HepG2 (cell line): ENCODE measurements at regions of chr20 and their contacts with region 1.

Region 1: GRCh38 chr20:33992923-33993575 is 662 bp upstream of the RALY start:
- DNase-seq: peak; percentile 100
- ATAC-seq: peak; percentile 84
- H3K4me3 ChIP-seq: peak overlapping the region; percentile 95 to 98 (median 96)
- H3K27ac ChIP-seq: peak overlapping the region; percentile 92
- H3K4me1 ChIP-seq: peaks cover 53% of the 10 kb centered on the region
- H3K27me3 ChIP-seq: no peaks in the 10 kb centered on the region; a peak in 1 of 5 replicates
- CTCF ChIP-seq: no peak
- EP300 ChIP-seq: peak in 1 of 2 experiments; percentile 25; a peak in 1 of 4 replicates
- POLR2A ChIP-seq: peak; percentile 99
- RAD21 ChIP-seq: peak; percentile 42; the same call in 1 of the 2 replicates

Region 2: DNA sequence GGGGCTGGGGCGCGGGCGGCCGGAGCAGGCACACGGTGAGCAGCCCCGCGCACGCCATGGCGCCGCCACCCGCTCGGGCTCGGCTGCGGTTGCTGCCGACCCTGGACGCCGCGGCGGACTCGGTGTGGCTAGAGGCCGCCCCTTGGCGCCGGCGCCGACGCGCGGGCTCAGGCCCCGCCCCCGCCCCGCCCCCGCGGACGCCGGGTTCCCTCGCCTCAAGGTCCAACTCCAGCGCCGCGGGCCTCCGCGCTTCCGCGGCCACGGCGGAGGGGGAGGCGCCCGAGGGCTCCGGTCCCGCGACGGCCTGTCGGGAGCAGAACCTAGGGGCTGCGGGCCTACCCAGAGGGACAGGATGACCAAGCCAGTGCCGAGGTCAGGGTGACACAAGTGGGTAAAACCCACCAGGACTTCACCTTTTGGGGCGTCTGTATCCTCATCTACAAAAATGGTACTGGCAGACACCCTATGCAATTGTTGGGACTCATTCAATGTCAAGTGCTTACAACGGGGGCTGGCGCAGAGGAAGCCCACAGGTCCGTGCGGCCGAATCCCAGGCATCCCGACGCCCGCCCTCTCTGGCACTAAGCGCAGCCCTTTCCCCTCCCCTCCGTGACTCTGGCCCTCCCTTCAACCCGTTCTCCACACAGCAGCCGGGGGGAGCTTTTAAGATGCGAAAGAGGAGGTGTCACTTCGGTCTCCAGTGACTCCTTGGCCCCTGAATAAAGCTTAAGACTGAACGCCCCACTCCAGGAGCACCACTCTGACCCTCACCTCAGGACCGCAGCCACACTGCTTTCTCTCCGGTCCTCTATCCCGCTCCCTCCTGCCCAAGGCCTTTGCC is 318.5 kb before region 1 on chr20 and contains the start of gene NECAB3:
- CTCF ChIA-PET with region 1: no interaction called
- POLR2A ChIA-PET with region 1: interaction called, 4 read pairs
- in situ Hi-C with region 1: no loop called
- intact Hi-C with region 1: loop called (anchors 5 kb)
- DNase-seq: peak; percentile 82
- ATAC-seq: peak; percentile 81
- H3K4me3 ChIP-seq: peak within 1 kb of the TSS; percentile 81 to 96 (median 96)
- H3K27ac ChIP-seq: peak within 1 kb of the TSS; percentile 81
- H3K4me1 ChIP-seq: peaks cover 51% of the 10 kb centered on the region
- H3K27me3 ChIP-seq: peaks cover 0 to 3% of the 10 kb centered on the region in 2 experiments; a peak in 1 of 5 replicates
- CTCF ChIP-seq: peak; percentile 57
- EP300 ChIP-seq: 0 out of 4 replicates have a peak, but pooled peaks of 1 of the 2 experiments have one; percentile 18
- POLR2A ChIP-seq: peak; percentile 68 to 92
- RAD21 ChIP-seq: peak; percentile 80
- total RNA-seq, gene NECAB3: 26.4 and 61.5 TPM in 2 replicates

Region 3: DNA sequence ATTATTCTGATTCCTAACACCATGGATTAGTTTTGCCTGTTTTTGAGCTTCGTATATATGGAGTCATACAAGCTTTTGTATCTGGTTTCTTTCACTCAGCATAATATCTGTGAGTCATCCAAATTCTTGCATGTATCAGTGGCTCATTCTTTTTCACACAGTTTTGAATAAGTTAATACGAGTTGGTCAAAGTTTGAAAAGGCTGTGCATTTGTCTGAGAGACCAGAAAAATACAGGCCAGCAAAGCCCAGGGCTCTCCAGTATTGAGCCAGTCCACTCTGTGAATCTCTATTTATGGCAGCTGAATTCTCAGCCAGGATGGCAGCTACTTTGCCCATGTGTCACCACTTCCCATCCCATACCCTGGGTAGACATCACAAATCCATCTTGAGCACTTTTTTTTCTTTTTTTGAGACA is 189.1 kb before region 1 on chr20:
- CTCF ChIA-PET with region 1: no interaction called
- POLR2A ChIA-PET with region 1: no interaction called
- in situ Hi-C with region 1: no loop called
- intact Hi-C with region 1: no loop called
- DNase-seq: no peak
- ATAC-seq: peak; percentile 21; the same call in 1 of the 3 replicates
- H3K4me3 ChIP-seq: no peak overlapping the region
- H3K27ac ChIP-seq: no peak overlapping the region
- H3K4me1 ChIP-seq: peaks cover 24% of the 10 kb centered on the region
- H3K27me3 ChIP-seq: no peaks in the 10 kb centered on the region
- CTCF ChIP-seq: no peak
- EP300 ChIP-seq: no peak
- POLR2A ChIP-seq: no peak
- RAD21 ChIP-seq: no peak

Region 4: GRCh38 chr20:33940666-33941065 is 52.4 kb before region 1 on chr20:
- CTCF ChIA-PET with region 1: no interaction called
- POLR2A ChIA-PET with region 1: interaction called, 13 read pairs
- in situ Hi-C with region 1: no loop called
- intact Hi-C with region 1: no loop called
- DNase-seq: no peak
- ATAC-seq: no peak
- H3K4me3 ChIP-seq: no peak overlapping the region
- H3K27ac ChIP-seq: no peak overlapping the region
- H3K4me1 ChIP-seq: peaks cover 17% of the 10 kb centered on the region
- H3K27me3 ChIP-seq: no peaks in the 10 kb centered on the region
- CTCF ChIP-seq: no peak
- EP300 ChIP-seq: no peak
- POLR2A ChIP-seq: no peak
- RAD21 ChIP-seq: no peak

Region 5: DNA sequence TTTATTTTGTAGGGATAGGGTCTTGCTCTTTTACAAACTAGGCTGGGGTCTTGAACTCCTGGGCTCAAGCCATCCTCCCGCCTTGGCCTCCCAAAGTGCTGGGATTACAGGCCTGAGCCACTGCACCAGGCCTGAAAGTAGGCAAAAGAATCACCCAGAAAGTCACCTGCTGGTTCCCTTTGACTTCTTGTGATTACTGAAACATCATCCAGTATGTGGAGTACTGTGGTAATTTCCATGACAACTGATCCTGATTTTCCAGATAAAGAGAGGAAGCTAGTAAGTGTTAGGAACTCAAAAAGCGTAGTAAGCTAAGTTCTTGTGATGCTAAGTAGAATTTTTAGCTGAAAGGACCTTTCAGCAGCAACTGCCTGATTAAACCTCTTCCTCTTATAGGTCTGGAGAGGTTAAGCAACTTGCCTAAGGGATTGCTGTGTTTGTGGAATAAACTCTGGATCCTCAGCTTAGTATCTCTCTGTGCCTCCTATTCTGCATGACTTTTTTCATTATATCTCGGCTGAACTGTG is 17.4 kb after region 1 on chr20:
- CTCF ChIA-PET with region 1: no interaction called
- POLR2A ChIA-PET with region 1: interaction called, 315 read pairs
- in situ Hi-C with region 1: no loop called
- intact Hi-C with region 1: loop called (anchors 1 kb)
- DNase-seq: no peak
- ATAC-seq: no peak
- H3K4me3 ChIP-seq: no peak overlapping the region
- H3K27ac ChIP-seq: peak overlapping the region; percentile 7
- H3K4me1 ChIP-seq: peaks cover 96% of the 10 kb centered on the region
- H3K27me3 ChIP-seq: no peaks in the 10 kb centered on the region
- CTCF ChIP-seq: no peak
- EP300 ChIP-seq: no peak
- POLR2A ChIP-seq: no peak
- RAD21 ChIP-seq: no peak

Region 6: GRCh38 chr20:34037121-34037520 is 44.1 kb after region 1 on chr20:
- CTCF ChIA-PET with region 1: no interaction called
- POLR2A ChIA-PET with region 1: interaction called, 5 read pairs
- in situ Hi-C with region 1: no loop called
- intact Hi-C with region 1: loop called (anchors 5 kb)
- DNase-seq: no peak
- ATAC-seq: peak; percentile 22; the same call in 2 of the 3 replicates
- H3K4me3 ChIP-seq: no peak overlapping the region
- H3K27ac ChIP-seq: no peak overlapping the region
- H3K4me1 ChIP-seq: peaks cover 29% of the 10 kb centered on the region
- H3K27me3 ChIP-seq: no peaks in the 10 kb centered on the region
- CTCF ChIP-seq: no peak
- EP300 ChIP-seq: no peak
- POLR2A ChIP-seq: no peak
- RAD21 ChIP-seq: no peak

Region 7: DNA sequence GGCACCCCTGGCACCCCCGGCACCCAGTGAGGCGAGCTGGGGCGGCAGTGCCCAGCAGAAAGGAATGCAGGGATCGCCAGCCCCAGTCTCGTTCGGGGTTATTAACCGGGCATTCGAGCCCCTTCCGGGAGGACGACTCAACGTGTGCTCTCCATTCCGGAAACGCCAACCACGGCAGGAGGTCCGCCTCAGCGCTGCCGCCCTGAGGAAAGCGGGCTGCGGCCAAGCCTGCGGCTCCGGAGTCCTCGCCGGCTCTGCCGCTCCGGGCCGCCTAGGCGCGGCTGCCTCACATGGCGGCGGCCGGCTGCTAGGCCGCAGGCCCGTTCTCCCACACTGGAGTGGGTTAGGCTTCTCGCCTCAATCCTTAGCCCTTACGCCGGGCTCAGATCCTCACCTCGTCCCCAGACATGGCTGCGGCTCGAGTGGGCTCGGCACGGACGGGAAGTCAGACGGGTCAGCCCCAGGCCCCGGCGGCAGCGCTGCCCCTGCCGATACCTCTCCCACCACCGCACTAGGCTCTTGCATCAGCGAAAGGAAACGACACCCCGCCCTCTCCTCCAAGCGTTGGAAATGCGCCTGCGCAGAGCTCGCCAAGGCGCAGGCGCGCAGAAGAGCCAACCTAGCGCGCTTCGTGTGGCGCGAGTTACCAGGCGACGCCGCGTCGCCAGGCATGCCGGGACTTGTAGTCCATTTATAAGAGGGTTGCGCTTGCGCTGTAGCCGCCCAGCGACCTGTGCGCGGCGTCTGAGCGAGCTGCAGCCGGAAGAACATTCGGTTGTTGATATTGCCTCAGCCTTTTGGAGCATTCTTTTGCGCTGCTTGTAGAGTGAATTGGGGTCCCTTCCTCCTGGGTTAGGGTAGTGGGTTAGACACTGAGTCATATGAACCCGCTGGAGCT is 118.9 kb after region 1 on chr20 and contains the start of gene EIF2S2:
- CTCF ChIA-PET with region 1: no interaction called
- POLR2A ChIA-PET with region 1: interaction called, 56 read pairs
- in situ Hi-C with region 1: no loop called
- intact Hi-C with region 1: no loop called
- DNase-seq: peak; percentile 99
- ATAC-seq: peak; percentile 91
- H3K4me3 ChIP-seq: peak within 1 kb of the TSS; percentile 93 to 100 (median 96)
- H3K27ac ChIP-seq: peak within 1 kb of the TSS; percentile 92
- H3K4me1 ChIP-seq: peaks cover 63% of the 10 kb centered on the region
- H3K27me3 ChIP-seq: peaks cover 0 to 4% of the 10 kb centered on the region in 2 experiments; a peak in 1 of 5 replicates
- CTCF ChIP-seq: no peak; the same call in 1 of the 2 replicates
- EP300 ChIP-seq: peak in 1 of 2 experiments; percentile 76; a peak in 2 of 4 replicates
- POLR2A ChIP-seq: peak; percentile 96 to 97
- RAD21 ChIP-seq: peak; percentile 83
- total RNA-seq, gene EIF2S2: 213 and 316 TPM in 2 replicates

Region 8: DNA sequence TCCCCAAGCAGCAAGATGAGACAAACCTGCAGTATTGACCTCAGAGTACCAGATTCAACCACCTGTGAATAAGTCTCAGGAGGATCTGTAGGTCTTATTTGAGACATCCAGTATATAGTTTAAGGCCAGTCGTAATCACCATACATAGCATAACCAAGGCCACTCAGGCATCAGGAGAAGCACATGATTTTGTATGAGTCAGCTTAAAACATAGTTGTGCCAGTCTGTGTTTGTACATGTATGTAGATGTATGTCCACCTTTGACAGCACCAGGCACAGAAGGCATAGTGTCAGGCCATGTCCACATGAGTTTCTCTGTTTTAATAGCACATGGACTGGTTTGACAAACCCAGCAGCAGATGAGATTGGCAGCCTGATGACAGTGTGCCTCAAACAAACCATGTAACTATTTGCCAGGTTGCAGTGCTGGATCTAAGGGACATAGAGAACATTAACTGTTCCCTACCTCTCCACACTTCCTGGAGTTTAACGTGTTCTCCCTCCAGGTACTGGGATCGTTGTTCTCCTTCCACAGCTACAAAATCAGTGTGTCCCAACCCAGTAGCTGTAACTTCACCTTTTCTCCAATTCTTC is 239.5 kb after region 1 on chr20:
- CTCF ChIA-PET with region 1: no interaction called
- POLR2A ChIA-PET with region 1: no interaction called
- in situ Hi-C with region 1: no loop called
- intact Hi-C with region 1: no loop called
- DNase-seq: no peak
- ATAC-seq: no peak
- H3K4me3 ChIP-seq: no peak overlapping the region
- H3K27ac ChIP-seq: no peak overlapping the region
- H3K4me1 ChIP-seq: peaks cover 6% of the 10 kb centered on the region; the same call in 1 of the 2 replicates
- H3K27me3 ChIP-seq: no peaks in the 10 kb centered on the region
- CTCF ChIP-seq: no peak
- EP300 ChIP-seq: no peak
- POLR2A ChIP-seq: no peak
- RAD21 ChIP-seq: no peak

Region 9: DNA sequence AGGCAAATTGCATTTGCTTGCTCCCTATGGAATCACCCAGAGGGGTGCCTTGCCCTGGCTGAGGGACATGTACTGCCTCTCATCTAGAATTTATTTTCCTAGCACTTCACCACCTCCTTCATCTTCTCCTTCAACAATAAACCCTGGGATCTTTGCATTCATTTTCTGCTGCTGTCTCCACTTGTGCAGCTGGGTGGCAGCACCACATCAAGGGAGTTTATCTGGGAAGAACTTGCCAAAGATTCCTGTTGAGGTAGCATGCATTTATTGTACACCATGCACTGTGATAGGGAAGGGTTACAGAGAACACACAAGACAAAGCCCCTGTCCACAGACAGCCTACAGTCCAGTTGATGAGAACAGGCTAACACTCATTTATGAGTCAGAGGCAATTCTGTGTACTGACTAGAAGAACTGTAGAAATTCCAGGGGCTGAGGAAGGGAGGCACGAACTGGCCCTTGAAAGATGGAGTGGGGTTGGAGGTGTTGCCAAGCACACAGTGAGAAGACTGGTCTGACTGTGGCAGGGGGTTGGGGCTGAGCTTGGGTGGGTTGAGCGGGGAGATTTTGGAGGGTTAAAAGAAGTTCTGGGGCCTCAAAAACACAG is 1518.9 kb after region 1 on chr20:
- CTCF ChIA-PET with region 1: no interaction called
- POLR2A ChIA-PET with region 1: no interaction called
- in situ Hi-C with region 1: no loop called
- intact Hi-C with region 1: no loop called
- DNase-seq: peak; percentile 53
- ATAC-seq: peak; percentile 32
- H3K4me3 ChIP-seq: no peak overlapping the region
- H3K27ac ChIP-seq: no peak overlapping the region
- H3K4me1 ChIP-seq: no peaks in the 10 kb centered on the region
- H3K27me3 ChIP-seq: no peaks in the 10 kb centered on the region
- CTCF ChIP-seq: peak; percentile 88
- EP300 ChIP-seq: no peak
- POLR2A ChIP-seq: no peak
- RAD21 ChIP-seq: peak; percentile 49; the same call in 1 of the 2 replicates